ENCODE measurements at regions of chr17 and their contacts with region 1.

Region 1: DNA sequence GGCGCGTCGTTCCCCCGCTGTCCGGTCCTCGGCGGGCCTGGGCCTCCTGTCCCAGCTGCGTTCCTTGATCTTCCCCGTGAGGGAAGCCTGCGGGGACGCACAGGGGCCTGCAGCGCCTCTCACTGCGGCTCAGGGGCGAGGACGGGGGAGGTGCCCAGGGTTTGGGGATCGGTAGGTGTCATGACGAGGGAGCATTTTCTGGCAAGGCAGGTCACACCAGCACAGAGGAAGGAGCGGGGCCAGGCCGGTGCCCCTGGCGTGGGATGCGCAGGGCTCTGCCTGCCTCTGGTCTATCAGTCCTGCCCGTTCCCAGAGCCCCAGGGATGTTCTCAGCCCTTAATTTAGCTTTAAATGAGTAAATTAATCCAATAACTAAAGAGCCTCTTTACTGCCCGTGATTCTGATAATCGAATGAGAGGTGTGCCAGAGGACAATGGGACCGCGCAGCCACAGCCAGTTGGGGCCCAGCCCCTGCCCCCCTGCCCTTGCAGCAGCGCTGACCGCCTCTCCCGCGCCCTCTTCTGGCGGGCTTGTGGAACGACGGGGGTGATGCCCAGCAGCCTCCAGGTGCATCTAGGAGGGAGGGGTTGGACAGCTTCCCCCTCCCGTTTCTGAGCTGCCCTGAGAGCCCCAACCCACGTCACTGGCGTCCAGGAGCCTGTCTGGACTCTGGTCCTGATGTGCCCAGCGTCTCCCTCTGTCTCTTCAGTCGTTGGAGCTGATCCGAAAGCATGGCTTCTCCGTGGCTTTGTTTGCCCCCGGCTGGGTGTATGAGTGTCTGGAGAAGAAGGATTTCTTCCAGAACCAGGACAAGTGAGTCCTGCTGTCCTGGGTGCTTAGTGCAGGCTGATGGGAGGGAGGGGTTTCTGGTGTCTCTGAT is 7.9 kb downstream of the ENGASE start:
- DNase-seq: peak in 2 of 5 donors; percentile 58 to 80
- H3K4me3 ChIP-seq: no peak overlapping the region
- H3K27ac ChIP-seq: no peak overlapping the region
- H3K4me1 ChIP-seq: peaks cover 0 to 4% (median 0%) of the 10 kb centered on the region in 3 donors
- H3K27me3 ChIP-seq: no peaks in the 10 kb centered on the region
- CTCF ChIP-seq: peak; percentile 35

Region 2: DNA sequence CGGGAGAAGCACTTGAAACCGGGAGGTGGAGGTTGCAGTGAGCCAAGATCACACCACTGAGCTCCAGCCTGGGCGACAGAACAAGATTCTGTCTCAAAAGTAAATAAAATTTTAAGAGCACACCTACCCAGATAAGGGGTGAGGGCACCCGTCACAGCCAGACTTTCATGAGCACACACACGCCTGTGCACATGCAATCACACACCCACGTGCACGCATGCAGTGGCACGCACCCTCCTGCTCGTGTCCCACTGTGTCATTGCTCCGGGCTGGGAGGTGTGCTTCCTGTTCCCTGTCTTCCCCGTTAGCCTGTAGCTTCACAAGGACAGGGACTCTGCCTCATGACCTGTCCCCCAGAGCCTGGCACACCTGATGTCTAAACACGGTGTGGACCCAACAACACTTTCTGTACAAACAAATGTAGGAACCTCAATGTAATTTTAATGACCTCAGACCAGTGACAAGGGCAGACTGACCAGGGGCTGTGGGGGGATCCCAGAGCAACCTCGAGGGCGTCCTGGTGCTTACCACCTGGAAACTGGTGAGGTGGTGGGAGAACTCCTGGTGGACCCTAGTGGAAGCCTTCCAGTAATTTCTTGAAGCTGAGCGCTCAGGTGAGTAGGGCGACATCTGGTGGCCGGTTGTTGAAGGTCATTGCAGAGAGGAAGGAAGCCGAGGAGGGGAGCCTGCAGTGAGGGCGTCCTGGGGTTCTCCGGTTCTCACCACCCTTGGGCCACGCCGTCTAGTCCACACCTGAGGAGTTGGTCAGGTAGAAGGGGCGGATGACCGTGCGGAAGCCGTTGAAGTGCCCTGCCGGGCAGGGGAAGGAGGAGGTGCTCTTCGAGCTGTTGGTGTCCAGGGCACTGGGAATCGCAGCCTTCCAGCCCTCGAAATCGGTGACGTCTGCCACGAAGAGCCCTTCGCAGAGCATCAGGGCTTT is 111.4 kb before region 1 on chr17:
- intact Hi-C with region 1: no loop called
- DNase-seq: peak; percentile 84 to 92 (median 88)
- H3K4me3 ChIP-seq: no peak overlapping the region
- H3K27ac ChIP-seq: peak overlapping the region in 1 of 2 donors; percentile 65
- H3K4me1 ChIP-seq: peaks cover 0 to 22% (median 9%) of the 10 kb centered on the region in 3 donors
- H3K27me3 ChIP-seq: no peaks in the 10 kb centered on the region
- CTCF ChIP-seq: peak; percentile 91

Region 3: DNA sequence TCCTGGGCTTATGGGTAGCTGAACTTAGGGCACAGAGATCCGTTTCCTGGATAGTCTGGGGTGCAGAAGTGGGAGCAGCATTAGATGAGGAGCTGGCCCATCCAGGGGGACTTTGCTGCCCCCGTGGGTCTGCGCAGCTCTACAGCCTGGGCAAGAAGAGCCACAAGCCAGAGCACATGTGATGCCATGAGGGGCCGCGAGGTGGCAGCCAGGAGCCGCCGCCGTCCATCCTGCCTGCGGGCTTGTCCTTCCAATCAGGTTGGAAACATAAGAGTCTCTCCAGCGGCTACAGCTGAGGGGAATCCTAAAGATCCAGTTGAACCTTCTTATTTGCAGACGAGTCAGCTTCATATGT is 36.7 kb before region 1 on chr17:
- intact Hi-C with region 1: loop called (anchors 5 kb)
- DNase-seq: peak; percentile 77 to 86 (median 83)
- H3K4me3 ChIP-seq: no peak overlapping the region
- H3K27ac ChIP-seq: no peak overlapping the region
- H3K4me1 ChIP-seq: peaks cover 0 to 5% (median 0%) of the 10 kb centered on the region in 3 donors
- H3K27me3 ChIP-seq: no peaks in the 10 kb centered on the region
- CTCF ChIP-seq: peak; percentile 89

Region 4: DNA sequence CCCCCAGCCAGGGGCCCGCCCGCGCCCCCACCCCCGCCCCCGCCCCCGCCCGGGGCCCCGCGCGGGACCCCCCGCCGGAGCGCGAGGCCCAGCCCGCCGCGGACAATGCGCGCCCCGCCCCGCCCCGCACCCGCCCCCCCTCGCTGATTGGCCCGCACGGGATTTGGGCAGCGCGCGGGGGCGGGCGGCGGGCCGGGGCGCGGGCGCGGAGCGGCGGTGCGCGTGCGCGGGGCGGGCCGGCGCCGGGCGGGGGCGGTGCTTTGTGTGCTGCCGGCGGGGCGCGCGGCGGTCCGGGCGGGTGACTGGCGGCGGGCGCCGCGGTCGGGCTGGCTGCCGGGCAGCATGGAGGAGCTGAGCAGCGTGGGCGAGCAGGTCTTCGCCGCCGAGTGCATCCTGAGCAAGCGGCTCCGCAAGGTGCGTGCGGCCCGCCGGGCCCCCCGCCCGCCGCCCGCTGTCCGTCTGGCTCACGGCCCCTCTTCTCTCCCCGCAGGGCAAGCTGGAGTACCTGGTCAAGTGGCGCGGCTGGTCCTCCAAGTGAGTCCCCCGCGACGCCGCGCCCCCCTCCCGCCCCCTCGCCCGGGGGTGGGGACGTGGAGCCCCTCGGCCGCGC is 695.4 kb after region 1 on chr17 and contains the start of gene CBX2:
- intact Hi-C with region 1: no loop called
- DNase-seq: peak; percentile 84 to 92 (median 88)
- H3K4me3 ChIP-seq: peak within 1 kb of the TSS in 2 of 3 donors; percentile 29 to 51
- H3K27ac ChIP-seq: no peak within 1 kb of the TSS
- H3K4me1 ChIP-seq: peaks cover 0 to 6% (median 2%) of the 10 kb centered on the region in 3 donors
- H3K27me3 ChIP-seq: no peaks in the 10 kb centered on the region
- CTCF ChIP-seq: no peak
- total RNA-seq, gene CBX2: 3.5 TPM

Measured in kidney (tissue), 22 donors.